ENCODE measurements at regions of chr17 and their contacts with region 1.

Region 1: DNA sequence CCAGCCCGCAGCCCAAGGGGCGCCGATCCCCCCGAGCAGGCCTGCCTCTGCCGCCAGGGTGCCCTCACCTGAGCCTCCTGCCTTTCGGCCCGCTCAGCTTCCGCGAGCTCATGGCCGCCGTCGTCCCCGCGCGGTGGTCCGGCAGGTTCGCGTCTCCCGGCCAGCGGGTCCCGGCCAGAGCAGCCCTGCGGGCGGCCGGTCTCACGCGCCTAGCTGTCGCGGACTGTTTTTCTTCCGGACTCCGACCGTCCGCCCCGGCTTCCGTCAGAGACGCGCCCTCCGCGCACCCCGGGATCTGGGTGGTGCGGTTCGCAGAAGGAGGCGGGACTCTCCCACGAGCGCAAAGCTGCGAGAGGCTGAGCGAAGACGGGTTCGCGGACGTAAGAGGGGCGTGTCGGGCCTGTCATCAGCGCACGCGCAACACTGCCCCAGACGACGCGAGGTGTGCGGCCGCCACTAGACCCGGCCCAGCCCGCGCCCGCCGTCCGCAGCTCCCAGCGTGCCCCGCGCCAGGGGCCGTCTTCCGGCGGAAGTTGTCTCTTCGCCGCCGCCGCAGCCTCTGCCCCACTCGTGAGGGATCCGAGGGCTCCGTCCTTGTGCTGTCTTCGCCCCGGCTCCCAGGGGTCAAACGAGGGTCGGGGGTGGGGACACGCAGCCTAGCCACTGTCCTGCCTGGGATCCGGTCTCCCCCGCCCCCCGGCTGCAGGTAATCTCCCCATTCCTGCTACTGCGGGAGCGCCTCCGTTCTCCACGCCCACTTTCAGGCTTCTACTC is at the start of gene INPP5K:
- DNase-seq: peak; percentile 98 to 99
- ATAC-seq: peak; percentile 81
- total RNA-seq, gene INPP5K: 39.9 to 40.4 TPM

Region 2: DNA sequence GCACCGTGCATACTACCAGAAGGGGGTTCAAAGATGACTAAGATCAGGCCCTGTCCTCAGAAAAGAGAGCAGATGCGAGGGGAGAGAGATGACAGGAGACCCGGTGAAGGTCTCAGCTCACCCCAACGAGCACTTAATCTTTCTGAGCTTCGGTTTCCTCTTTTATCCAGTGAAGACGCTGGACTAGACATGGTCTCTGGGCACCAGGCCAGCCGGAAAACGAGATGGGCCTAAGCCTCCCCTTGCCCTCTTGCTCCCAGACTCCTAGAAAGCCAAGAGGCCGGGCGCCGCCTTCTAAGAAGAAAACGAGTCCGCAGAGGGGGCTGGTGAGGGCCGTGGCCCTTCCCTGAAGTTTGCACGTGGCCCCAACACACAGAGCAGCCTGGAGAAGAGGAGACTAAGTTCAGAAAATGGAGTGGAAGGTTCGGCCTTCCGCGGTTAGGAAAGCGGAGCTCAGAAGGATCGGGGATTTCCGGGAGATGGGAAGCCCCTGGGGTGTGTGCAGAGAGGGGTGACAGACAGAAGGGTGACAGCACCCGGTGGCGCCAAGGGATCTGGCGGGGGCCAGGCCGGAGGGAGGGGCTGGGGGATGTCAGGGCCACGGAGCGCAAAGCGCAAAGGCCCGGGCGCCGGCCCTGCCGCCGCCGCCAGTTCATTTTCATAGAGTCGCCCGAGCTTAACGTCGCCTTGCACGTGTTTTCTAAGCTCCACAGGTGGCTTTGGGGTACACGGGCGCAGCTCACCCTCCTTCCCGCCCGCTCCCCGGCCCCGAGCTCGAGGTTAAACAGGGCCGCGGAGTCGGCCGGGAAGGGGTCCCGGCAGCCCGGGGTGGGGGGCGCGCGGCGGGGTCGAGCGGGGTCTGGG is 288.4 kb before region 1 on chr17:
- intact Hi-C with region 1: no loop called
- DNase-seq: peak; percentile 51 to 77
- ATAC-seq: peak; percentile 20

Region 3: DNA sequence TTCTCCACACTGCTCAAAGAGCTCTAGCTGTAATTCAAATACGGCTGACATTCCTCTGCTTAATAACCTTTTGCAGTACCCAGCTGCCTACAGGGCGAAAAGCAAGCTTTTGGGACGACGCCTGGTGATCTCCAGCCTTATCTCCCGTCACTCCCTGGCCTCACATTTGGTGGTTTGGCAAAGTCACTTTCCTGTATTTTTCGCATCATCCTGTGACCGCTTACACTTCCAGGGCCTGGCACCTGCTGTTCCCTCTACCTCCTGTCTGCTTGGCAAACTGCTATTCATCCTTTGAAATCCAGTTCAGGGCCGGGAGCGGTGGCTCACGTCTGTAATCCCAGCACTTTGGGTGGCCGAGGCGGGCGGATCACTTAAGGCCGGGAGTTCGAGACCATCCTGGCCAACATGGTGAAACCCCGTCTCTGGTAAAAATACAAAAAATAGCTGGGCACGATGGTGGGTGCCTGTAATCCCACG is 249.1 kb before region 1 on chr17:
- intact Hi-C with region 1: loop called in 1 of 2 experiments (anchors 10 kb)
- DNase-seq: no peak
- ATAC-seq: peak; percentile 13

Region 4: GRCh38 chr17:1365445-1366039 is 151.0 kb before region 1 on chr17:
- intact Hi-C with region 1: loop called in 1 of 2 experiments (anchors 10 kb)
- DNase-seq: peak; percentile 41 to 47
- ATAC-seq: peak; percentile 86